A673 (cell line): ENCODE measurements at regions of chr10 and their contacts with region 1.

Region 1: GRCh38 chr10:72319416-72320254 is 35.1 kb downstream of the DNAJB12 start:
- DNase-seq: peak; percentile 93
- H3K4me3 ChIP-seq: peak overlapping the region; percentile 45
- H3K27ac ChIP-seq: peak overlapping the region; percentile 96
- H3K4me1 ChIP-seq: peaks cover 46% of the 10 kb centered on the region
- H3K27me3 ChIP-seq: no peaks in the 10 kb centered on the region
- CTCF ChIP-seq: no peak

Region 2: GRCh38 chr10:71431239-71432100 is 888.2 kb before region 1 on chr10:
- CTCF ChIA-PET with region 1: interaction called, 23 read pairs
- POLR2A ChIA-PET with region 1: no interaction called
- intact Hi-C with region 1: no loop called
- DNase-seq: peak; percentile 65
- H3K4me3 ChIP-seq: peak overlapping the region; percentile 4
- H3K27ac ChIP-seq: peak overlapping the region; percentile 80
- H3K4me1 ChIP-seq: peaks cover 74% of the 10 kb centered on the region
- H3K27me3 ChIP-seq: no peaks in the 10 kb centered on the region
- CTCF ChIP-seq: peak; percentile 33

Region 3: GRCh38 chr10:72223743-72224101 is 95.9 kb before region 1 on chr10:
- CTCF ChIA-PET with region 1: interaction called, 4 read pairs
- POLR2A ChIA-PET with region 1: no interaction called
- intact Hi-C with region 1: loop called (anchors 10 kb)
- DNase-seq: no peak
- H3K4me3 ChIP-seq: no peak overlapping the region
- H3K27ac ChIP-seq: peak overlapping the region; percentile 18
- H3K4me1 ChIP-seq: peaks cover 31% of the 10 kb centered on the region
- H3K27me3 ChIP-seq: no peaks in the 10 kb centered on the region
- CTCF ChIP-seq: no peak

Region 4: GRCh38 chr10:72303424-72304128 is 16.1 kb before region 1 on chr10:
- CTCF ChIA-PET with region 1: interaction called, 11 read pairs
- POLR2A ChIA-PET with region 1: interaction called, 3 read pairs
- intact Hi-C with region 1: no loop called
- DNase-seq: no peak
- H3K4me3 ChIP-seq: no peak overlapping the region
- H3K27ac ChIP-seq: no peak overlapping the region
- H3K4me1 ChIP-seq: peaks cover 8% of the 10 kb centered on the region
- H3K27me3 ChIP-seq: no peaks in the 10 kb centered on the region
- CTCF ChIP-seq: no peak

Region 5: GRCh38 chr10:72435570-72435969 is 115.9 kb after region 1 on chr10:
- CTCF ChIA-PET with region 1: no interaction called
- POLR2A ChIA-PET with region 1: no interaction called
- intact Hi-C with region 1: no loop called
- DNase-seq: no peak
- H3K4me3 ChIP-seq: no peak overlapping the region
- H3K27ac ChIP-seq: no peak overlapping the region
- H3K4me1 ChIP-seq: no peaks in the 10 kb centered on the region
- H3K27me3 ChIP-seq: no peaks in the 10 kb centered on the region
- CTCF ChIP-seq: no peak

Region 6: DNA sequence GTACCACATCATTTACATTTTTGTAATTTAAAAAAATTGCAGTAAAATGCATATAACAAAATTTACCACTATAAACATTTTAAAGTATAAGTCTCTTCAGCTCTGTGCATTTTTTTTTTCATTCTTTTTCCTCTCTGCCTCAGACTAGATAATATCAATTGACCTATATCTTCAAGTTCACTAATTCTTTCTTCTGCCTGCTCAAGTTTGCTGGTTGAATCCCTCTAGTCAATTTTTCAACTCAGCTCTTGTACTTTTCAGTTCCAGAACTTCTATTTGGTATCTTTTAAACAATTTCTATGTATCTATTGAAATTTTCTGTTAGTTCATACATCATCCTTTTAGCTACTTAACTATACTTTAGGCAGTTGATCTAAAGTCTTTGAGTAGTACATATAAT is 194.3 kb after region 1 on chr10:
- CTCF ChIA-PET with region 1: no interaction called
- POLR2A ChIA-PET with region 1: interaction called, 11 read pairs
- intact Hi-C with region 1: no loop called
- DNase-seq: no peak
- H3K4me3 ChIP-seq: no peak overlapping the region
- H3K27ac ChIP-seq: no peak overlapping the region
- H3K4me1 ChIP-seq: no peaks in the 10 kb centered on the region
- H3K27me3 ChIP-seq: no peaks in the 10 kb centered on the region
- CTCF ChIP-seq: no peak